AG04449 (cell line): ENCODE measurements at regions of chr15 and their contacts with region 1.

Region 1: GRCh38 chr15:34065941-34066340 is 26.9 kb upstream of the AVEN start:
- DNase-seq: no peak
- H3K4me3 ChIP-seq: no peak overlapping the region
- CTCF ChIP-seq: no peak

Region 2: DNA sequence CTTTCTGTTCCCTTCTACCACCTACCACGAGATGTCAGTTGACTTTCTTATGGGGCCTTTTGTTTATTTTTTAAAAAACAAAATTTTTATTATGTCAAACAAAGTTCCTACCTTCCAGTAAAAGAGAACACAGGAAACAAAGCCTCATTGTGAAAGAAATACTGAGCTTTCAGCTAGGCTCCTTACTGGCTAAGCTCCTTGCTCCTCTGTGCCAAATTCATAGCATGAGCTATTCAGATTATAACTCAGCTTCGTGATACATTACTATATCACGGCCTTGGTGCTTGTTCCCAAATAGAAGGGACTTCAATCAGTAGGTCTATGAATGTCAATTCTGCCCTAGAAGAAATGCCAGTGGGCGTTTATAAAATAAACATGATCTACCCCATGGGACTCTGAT is 243.5 kb before region 1 on chr15:
- CTCF ChIA-PET with region 1: no interaction called
- POLR2A ChIA-PET with region 1: no interaction called
- DNase-seq: no peak
- H3K4me3 ChIP-seq: no peak overlapping the region
- CTCF ChIP-seq: no peak

Region 3: DNA sequence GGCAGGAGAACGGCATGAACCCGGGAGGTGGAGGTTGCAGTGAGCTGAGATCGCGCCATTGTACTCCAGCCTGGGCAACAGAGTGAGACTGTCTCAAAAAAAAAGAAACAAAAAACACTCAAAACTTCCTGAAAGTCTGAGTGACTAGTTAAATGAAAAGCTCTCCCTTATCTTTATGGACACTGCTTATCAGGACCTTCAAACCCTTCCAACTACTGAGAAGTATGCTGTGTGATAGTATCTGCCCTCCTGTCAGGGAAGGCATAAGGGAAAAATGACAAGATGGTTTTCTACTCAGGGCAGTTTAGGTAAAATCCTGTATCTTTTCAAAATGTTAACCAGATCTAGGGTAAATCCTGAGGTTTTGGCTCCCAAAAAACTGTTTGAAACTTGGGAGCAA is 14.0 kb after region 1 on chr15:
- CTCF ChIA-PET with region 1: interaction called, 10 read pairs
- POLR2A ChIA-PET with region 1: no interaction called
- DNase-seq: no peak
- H3K4me3 ChIP-seq: no peak overlapping the region
- CTCF ChIP-seq: no peak